ENCODE measurements at regions of chr19 and their contacts with region 1.

Region 1: DNA sequence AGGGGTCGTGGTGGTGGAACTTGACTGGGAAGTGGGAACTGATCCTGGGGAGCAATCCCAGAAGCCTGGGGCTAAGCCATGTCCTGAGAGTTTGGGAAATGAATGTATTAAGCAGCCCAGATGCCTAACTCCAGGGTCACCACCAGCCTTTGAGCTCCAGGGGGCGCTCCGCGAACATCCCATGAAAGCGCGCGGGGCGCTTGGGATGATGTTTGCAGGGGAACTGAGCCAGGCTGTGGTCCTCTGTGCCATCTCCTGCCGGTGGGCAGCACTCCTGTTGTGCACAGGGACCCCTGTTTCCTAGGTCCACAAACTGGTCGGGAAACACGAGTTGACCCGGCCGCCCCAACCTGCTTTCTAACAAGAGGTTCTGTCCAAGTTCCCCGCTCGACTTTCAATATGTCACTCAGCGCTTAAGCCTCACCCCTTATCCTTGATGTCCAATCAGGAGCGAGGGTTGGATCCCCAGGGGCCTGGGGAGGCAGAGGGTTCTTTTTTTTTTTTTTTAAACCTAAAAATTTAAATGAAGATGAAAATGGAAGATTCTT is 14.4 kb downstream of the LEUTX start:
- DNase-seq: peak; percentile 87
- ATAC-seq: peak; percentile 97
- H3K4me3 Mint-ChIP-seq: peak overlapping the region; percentile 68
- H3K27ac Mint-ChIP-seq: no peak overlapping the region
- H3K4me1 Mint-ChIP-seq: no peaks in the 10 kb centered on the region
- H3K27me3 Mint-ChIP-seq: peaks cover 5% of the 10 kb centered on the region

Region 2: GRCh38 chr19:39765091-39766076 is 27.7 kb before region 1 on chr19:
- CTCF ChIA-PET with region 1: interaction called, 10 read pairs
- POLR2A ChIA-PET with region 1: no interaction called
- intact Hi-C with region 1: no loop called
- DNase-seq: peak; percentile 63
- ATAC-seq: no peak
- H3K4me3 Mint-ChIP-seq: no peak overlapping the region
- H3K27ac Mint-ChIP-seq: no peak overlapping the region
- H3K4me1 Mint-ChIP-seq: no peaks in the 10 kb centered on the region
- H3K27me3 Mint-ChIP-seq: peaks cover 21% of the 10 kb centered on the region

Region 3: GRCh38 chr19:39778763-39779162 is 14.3 kb before region 1 on chr19 and contains the start of gene LEUTX:
- CTCF ChIA-PET with region 1: interaction called, 12 read pairs
- POLR2A ChIA-PET with region 1: no interaction called
- intact Hi-C with region 1: no loop called
- DNase-seq: peak; percentile 44
- ATAC-seq: peak; percentile 78
- H3K4me3 Mint-ChIP-seq: no peak within 1 kb of the TSS
- H3K27ac Mint-ChIP-seq: no peak within 1 kb of the TSS
- H3K4me1 Mint-ChIP-seq: no peaks in the 10 kb centered on the region
- H3K27me3 Mint-ChIP-seq: peaks cover 22% of the 10 kb centered on the region
- total RNA-seq, gene LEUTX: not detected

Region 4: GRCh38 chr19:39824143-39825092 is 31.3 kb after region 1 on chr19:
- CTCF ChIA-PET with region 1: interaction called, 8 read pairs
- POLR2A ChIA-PET with region 1: no interaction called
- intact Hi-C with region 1: loop called in 1 of 2 experiments (anchors 1 kb)
- DNase-seq: peak; percentile 94
- ATAC-seq: peak; percentile 100
- H3K4me3 Mint-ChIP-seq: no peak overlapping the region
- H3K27ac Mint-ChIP-seq: no peak overlapping the region
- H3K4me1 Mint-ChIP-seq: peaks cover 6% of the 10 kb centered on the region
- H3K27me3 Mint-ChIP-seq: no peaks in the 10 kb centered on the region

Region 5: DNA sequence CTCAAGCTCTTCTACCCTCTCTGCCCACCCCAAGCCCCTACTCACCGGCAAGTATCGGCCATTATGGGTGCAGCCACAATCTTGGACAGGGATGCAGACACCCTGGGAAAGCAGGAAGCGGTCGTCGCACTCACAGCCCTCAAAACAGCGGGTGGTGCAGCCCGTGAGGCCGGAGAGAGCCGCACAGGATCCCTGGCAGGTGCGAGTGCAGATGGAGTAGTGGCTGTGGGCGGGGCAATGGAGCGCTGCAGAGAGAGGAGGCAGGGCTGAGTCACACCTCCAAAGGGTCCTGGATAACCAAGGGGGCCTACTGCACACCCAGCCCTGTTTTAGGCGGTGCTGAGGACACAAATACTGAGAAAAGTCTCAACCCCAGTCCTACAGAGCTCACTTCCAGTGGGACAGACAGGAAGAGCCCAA is 77.1 kb after region 1 on chr19:
- CTCF ChIA-PET with region 1: no interaction called
- POLR2A ChIA-PET with region 1: no interaction called
- intact Hi-C with region 1: no loop called
- DNase-seq: no peak
- ATAC-seq: no peak
- H3K4me3 Mint-ChIP-seq: no peak overlapping the region
- H3K27ac Mint-ChIP-seq: no peak overlapping the region
- H3K4me1 Mint-ChIP-seq: no peaks in the 10 kb centered on the region
- H3K27me3 Mint-ChIP-seq: no peaks in the 10 kb centered on the region

Region 6: GRCh38 chr19:39941615-39942365 is 148.7 kb after region 1 on chr19:
- CTCF ChIA-PET with region 1: no interaction called
- POLR2A ChIA-PET with region 1: no interaction called
- intact Hi-C with region 1: no loop called
- DNase-seq: peak; percentile 58
- ATAC-seq: peak; percentile 54
- H3K4me3 Mint-ChIP-seq: peak overlapping the region; percentile 54
- H3K27ac Mint-ChIP-seq: peak overlapping the region; percentile 79
- H3K4me1 Mint-ChIP-seq: peaks cover 77% of the 10 kb centered on the region
- H3K27me3 Mint-ChIP-seq: no peaks in the 10 kb centered on the region

Region 7: GRCh38 chr19:40165362-40165937 is 372.4 kb after region 1 on chr19:
- CTCF ChIA-PET with region 1: interaction called, 3 read pairs
- POLR2A ChIA-PET with region 1: no interaction called
- intact Hi-C with region 1: loop called in 1 of 2 experiments (anchors 2 kb)
- DNase-seq: peak; percentile 84
- ATAC-seq: peak; percentile 90
- H3K4me3 Mint-ChIP-seq: no peak overlapping the region
- H3K27ac Mint-ChIP-seq: no peak overlapping the region
- H3K4me1 Mint-ChIP-seq: peaks cover 8% of the 10 kb centered on the region
- H3K27me3 Mint-ChIP-seq: no peaks in the 10 kb centered on the region

Region 8: GRCh38 chr19:40221858-40222837 is 429.1 kb after region 1 on chr19:
- CTCF ChIA-PET with region 1: no interaction called
- POLR2A ChIA-PET with region 1: no interaction called
- intact Hi-C with region 1: loop called in 1 of 2 experiments (anchors 1 kb)
- DNase-seq: peak; percentile 84
- ATAC-seq: peak; percentile 85
- H3K4me3 Mint-ChIP-seq: no peak overlapping the region
- H3K27ac Mint-ChIP-seq: no peak overlapping the region
- H3K4me1 Mint-ChIP-seq: peaks cover 13% of the 10 kb centered on the region
- H3K27me3 Mint-ChIP-seq: peaks cover 57% of the 10 kb centered on the region

Measured in activated CD4-positive, alpha-beta T cell treated with anti-CD3 and anti-CD28 coated beads for 36 hours (primary cell).